ENCODE measurements at regions of chr7 and their contacts with region 1.

Region 1: DNA sequence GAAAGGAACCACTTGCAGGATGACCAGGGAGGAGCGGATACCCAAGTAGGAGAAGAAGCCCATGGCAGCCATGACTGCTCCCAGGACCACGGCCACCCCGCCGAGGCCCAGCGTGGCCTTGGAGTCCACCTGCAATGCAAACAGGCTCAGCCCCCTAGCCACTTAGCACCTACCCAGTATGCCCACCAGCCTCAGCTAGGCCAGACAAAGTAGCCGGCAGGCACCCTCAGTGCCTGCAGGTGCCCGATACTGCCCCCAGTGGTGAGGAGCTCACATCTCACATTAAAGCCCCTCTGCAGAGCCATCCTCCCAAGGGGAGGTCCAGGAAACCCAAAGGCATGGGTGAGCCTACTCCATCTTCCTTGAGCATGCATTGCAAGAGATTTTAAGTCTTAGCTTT is 6.6 kb downstream of the NPC1L1 start:
- DNase-seq: peak; percentile 56 to 91
- ATAC-seq: peak; percentile 72 to 92
- H3K4me3 ChIP-seq: no peak overlapping the region
- H3K27ac ChIP-seq: no peak overlapping the region
- H3K4me1 ChIP-seq: no peaks in the 10 kb centered on the region
- CTCF ChIP-seq: peak; percentile 30; the same call in 2 of the 3 replicates
- EP300 ChIP-seq: no peak
- POLR2A ChIP-seq: no peak
- RAD21 ChIP-seq: peak in 1 of 2 experiments; percentile 16; a peak in 1 of 5 replicates

Region 2: GRCh38 chr7:44515590-44516268 is 18.8 kb before region 1 on chr7:
- CTCF ChIA-PET with region 1: interaction called, 10 read pairs
- POLR2A ChIA-PET with region 1: no interaction called
- DNase-seq: no peak
- ATAC-seq: no peak
- H3K4me3 ChIP-seq: no peak overlapping the region
- H3K27ac ChIP-seq: no peak overlapping the region
- H3K4me1 ChIP-seq: no peaks in the 10 kb centered on the region
- CTCF ChIP-seq: no peak
- EP300 ChIP-seq: no peak
- POLR2A ChIP-seq: no peak
- RAD21 ChIP-seq: no peak

Measured in A549 (cell line).